Activated CD4-positive, alpha-beta memory T cell treated with anti-CD3 and anti-CD28 coated beads for 36 hours (primary cell): ENCODE measurements at regions of chr6 and their contacts with region 1.

Region 1: GRCh38 chr6:43386492-43386891 is 17.0 kb upstream of the ZNF318 start:
- DNase-seq: no peak
- H3K4me3 Mint-ChIP-seq: no peak overlapping the region
- H3K27ac Mint-ChIP-seq: no peak overlapping the region
- H3K4me1 Mint-ChIP-seq: peaks cover 55% of the 10 kb centered on the region
- H3K27me3 Mint-ChIP-seq: no peaks in the 10 kb centered on the region

Region 2: GRCh38 chr6:42845327-42845694 is 541.2 kb before region 1 on chr6:
- CTCF ChIA-PET with region 1: no interaction called
- POLR2A ChIA-PET with region 1: no interaction called
- intact Hi-C with region 1: no loop called
- DNase-seq: no peak
- H3K4me3 Mint-ChIP-seq: no peak overlapping the region
- H3K27ac Mint-ChIP-seq: no peak overlapping the region
- H3K4me1 Mint-ChIP-seq: peaks cover 22% of the 10 kb centered on the region
- H3K27me3 Mint-ChIP-seq: no peaks in the 10 kb centered on the region

Region 3: DNA sequence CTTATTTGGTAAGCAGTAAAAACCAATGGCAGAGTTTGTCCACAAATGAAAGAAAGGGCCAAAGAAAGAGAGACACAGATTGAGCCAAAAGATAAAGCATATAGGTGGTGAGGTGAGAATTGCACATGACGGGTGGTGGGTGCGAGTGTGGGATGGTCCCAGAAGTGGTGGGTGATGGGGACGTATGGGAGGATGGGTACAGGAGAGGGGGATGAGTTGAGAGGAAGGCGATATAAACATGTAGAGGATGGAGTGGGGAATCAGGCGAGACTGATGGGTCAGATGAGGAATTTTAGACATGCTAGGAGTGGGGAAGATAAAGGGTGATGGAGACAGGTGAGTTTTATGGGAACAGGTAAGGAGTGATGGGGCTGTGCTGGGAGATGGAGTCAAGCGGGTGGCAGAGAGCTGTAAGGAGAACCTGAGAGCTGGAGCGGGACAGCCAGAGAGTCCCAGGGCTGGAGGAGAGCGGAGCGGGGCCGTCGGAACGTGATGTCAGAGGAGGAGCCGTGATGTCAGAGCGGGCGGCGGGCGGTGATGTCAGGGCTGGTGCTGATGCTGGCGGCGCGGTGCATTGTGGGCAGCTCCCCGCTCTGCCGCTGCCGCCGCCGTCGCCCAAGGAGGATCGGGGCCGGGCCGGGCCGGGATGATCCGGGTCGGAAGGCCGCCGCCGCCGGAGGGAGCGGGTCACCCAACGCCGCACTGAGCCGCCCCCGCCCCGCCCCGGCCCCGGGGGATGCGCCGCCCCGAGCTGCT is 143.4 kb before region 1 on chr6 and contains the start of gene TTBK1:
- CTCF ChIA-PET with region 1: no interaction called
- POLR2A ChIA-PET with region 1: no interaction called
- intact Hi-C with region 1: no loop called
- DNase-seq: peak; percentile 55
- H3K4me3 Mint-ChIP-seq: no peak within 1 kb of the TSS
- H3K27ac Mint-ChIP-seq: no peak within 1 kb of the TSS
- H3K4me1 Mint-ChIP-seq: peaks cover 13% of the 10 kb centered on the region
- H3K27me3 Mint-ChIP-seq: peaks cover 16% of the 10 kb centered on the region
- total RNA-seq, gene TTBK1: 0.31 to 0.34 TPM

Region 4: DNA sequence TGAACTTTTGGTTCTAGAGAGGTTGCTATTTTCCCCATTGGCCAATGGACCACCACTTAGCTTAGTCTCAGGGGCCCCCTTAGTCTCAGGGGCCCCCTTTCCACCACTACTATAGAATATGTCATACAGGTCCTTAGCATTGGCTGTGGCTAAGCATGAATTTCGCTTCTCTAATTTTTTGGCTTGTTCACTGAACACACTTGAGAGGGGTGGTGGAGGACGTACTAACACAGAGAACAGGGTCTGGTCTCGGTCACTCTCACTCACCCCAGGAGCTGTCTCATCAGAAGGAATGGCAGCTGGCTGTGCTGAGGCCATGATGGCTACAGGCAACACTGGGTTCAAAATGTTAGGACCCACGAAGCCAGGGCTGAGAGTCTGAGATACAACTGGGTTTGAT is 47.3 kb before region 1 on chr6:
- CTCF ChIA-PET with region 1: no interaction called
- POLR2A ChIA-PET with region 1: no interaction called
- intact Hi-C with region 1: no loop called
- DNase-seq: no peak
- H3K4me3 Mint-ChIP-seq: no peak overlapping the region
- H3K27ac Mint-ChIP-seq: no peak overlapping the region
- H3K4me1 Mint-ChIP-seq: peaks cover 7% of the 10 kb centered on the region
- H3K27me3 Mint-ChIP-seq: no peaks in the 10 kb centered on the region

Region 5: DNA sequence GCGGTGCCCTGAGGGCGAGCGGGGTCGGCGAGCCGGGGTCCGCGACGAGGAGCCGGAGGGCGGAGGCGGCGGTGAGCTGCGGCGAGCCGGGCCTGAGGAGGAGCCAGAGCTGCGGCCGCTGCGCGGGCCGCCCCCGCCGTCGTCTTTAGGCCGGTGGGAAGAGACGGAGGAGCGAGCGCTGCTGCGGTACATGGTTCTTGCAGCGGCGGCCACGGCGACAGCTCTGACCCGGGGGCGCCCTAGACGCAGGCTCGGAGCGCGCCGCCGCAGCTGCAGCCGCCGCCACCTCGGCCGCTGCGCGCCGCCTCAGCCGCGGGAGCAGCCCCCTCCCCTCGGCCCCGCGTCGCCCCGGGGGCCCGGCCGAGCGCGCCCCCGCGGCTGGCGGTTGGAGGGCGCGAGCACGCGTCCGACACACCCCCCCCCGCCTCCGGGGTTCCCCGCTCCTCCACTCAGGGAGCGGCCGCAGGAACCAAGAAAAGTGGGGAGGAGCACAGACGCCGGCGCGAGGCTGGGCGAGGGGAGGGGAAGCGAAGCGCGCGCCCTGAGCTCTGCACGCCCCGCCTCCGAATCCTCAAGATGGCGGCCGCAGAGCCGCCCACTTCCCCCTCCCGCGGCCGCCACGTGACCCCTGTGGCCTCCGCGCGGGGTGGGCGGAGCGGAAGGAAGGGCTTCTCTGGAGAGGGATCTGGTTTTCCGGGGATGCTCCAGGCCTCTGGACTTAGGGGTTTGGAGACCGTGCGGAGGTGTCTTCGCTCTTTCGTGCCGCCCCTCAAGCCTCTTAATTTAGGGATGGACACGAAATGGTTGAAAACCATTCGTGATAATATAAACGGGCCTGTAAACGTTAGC is 17.1 kb before region 1 on chr6 and contains the start of gene ZNF318:
- CTCF ChIA-PET with region 1: interaction called, 8 read pairs
- POLR2A ChIA-PET with region 1: interaction called, 24 read pairs
- intact Hi-C with region 1: loop called (anchors 1 kb)
- DNase-seq: peak; percentile 96
- H3K4me3 Mint-ChIP-seq: peak within 1 kb of the TSS; percentile 85
- H3K27ac Mint-ChIP-seq: peak within 1 kb of the TSS; percentile 91
- H3K4me1 Mint-ChIP-seq: peaks cover 30% of the 10 kb centered on the region
- H3K27me3 Mint-ChIP-seq: no peaks in the 10 kb centered on the region
- total RNA-seq, gene ZNF318: 12.1 to 12.7 TPM

Region 6: GRCh38 chr6:43402820-43403219 is 16.3 kb after region 1 on chr6:
- CTCF ChIA-PET with region 1: interaction called, 8 read pairs
- POLR2A ChIA-PET with region 1: no interaction called
- intact Hi-C with region 1: loop called (anchors 2 kb)
- DNase-seq: no peak
- H3K4me3 Mint-ChIP-seq: no peak overlapping the region
- H3K27ac Mint-ChIP-seq: no peak overlapping the region
- H3K4me1 Mint-ChIP-seq: peaks cover 1% of the 10 kb centered on the region
- H3K27me3 Mint-ChIP-seq: no peaks in the 10 kb centered on the region

Region 7: DNA sequence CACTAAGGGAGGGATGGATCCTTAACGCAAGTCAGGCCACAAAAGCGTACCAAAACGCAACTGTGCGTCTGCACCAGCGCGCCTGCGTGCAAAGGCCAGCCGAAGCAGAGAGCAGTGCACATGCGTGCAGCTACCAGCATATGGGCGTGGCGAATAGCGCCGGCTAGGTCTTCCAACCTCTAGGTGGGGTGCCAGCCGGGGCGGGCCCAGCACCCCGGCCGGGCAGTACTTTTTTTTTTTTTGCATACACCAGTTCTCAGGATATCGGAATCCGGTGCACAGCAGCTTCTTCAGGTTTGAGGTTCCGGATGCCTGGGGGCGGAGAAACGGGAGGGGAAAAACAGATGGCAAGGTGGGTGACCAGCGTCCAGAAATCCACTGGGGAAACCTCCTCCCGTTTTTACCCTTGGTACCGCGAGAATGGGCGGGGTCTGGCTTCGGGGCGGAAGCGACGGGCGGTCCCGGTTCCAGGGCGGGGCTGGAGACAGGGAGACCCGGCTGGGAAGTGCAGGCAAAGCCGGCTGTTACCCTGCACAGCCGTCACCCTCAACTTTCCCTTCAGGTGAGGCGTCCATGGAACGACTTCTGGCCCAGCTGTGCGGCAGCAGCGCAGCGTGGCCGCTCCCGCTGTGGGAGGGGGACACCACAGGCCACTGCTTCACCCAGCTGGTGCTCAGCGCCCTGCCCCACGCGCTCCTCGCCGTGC is 41.1 kb after region 1 on chr6 and contains the start of gene ABCC10:
- CTCF ChIA-PET with region 1: interaction called, 6 read pairs
- POLR2A ChIA-PET with region 1: interaction called, 8 read pairs
- intact Hi-C with region 1: loop called (anchors 1 kb)
- DNase-seq: peak; percentile 97
- H3K4me3 Mint-ChIP-seq: peak within 1 kb of the TSS; percentile 95
- H3K27ac Mint-ChIP-seq: peak within 1 kb of the TSS; percentile 96
- H3K4me1 Mint-ChIP-seq: peaks cover 17% of the 10 kb centered on the region
- H3K27me3 Mint-ChIP-seq: no peaks in the 10 kb centered on the region
- total RNA-seq, gene ABCC10: 27.2 to 31.9 TPM